WTC11 (cell line): ENCODE measurements at regions of chr12 and their contacts with region 1.

Region 1: GRCh38 chr12:13255792-13256691 is 59.5 kb downstream of the EMP1 start:
- DNase-seq: peak; percentile 98
- ATAC-seq: peak; percentile 93
- H3K4me3 Mint-ChIP-seq: peak overlapping the region; percentile 53
- H3K27ac Mint-ChIP-seq: peak overlapping the region; percentile 94
- H3K4me1 Mint-ChIP-seq: peaks cover 32% of the 10 kb centered on the region
- H3K27me3 Mint-ChIP-seq: peaks cover 21% of the 10 kb centered on the region
- CTCF ChIP-seq: peak; percentile 94

Region 2: GRCh38 chr12:12776261-12776660 is 479.8 kb before region 1 on chr12:
- CTCF ChIA-PET with region 1: no interaction called
- POLR2A ChIA-PET with region 1: no interaction called
- DNase-seq: no peak
- ATAC-seq: no peak
- H3K4me3 Mint-ChIP-seq: no peak overlapping the region
- H3K27ac Mint-ChIP-seq: no peak overlapping the region
- H3K4me1 Mint-ChIP-seq: no peaks in the 10 kb centered on the region
- H3K27me3 Mint-ChIP-seq: no peaks in the 10 kb centered on the region; the same call in 1 of the 2 replicates
- CTCF ChIP-seq: no peak

Region 3: GRCh38 chr12:13270817-13271216 is 14.8 kb after region 1 on chr12:
- CTCF ChIA-PET with region 1: interaction called, 118 read pairs
- POLR2A ChIA-PET with region 1: no interaction called
- DNase-seq: no peak
- ATAC-seq: peak; percentile 57
- H3K4me3 Mint-ChIP-seq: no peak overlapping the region
- H3K27ac Mint-ChIP-seq: no peak overlapping the region
- H3K4me1 Mint-ChIP-seq: peaks cover 22% of the 10 kb centered on the region
- H3K27me3 Mint-ChIP-seq: no peaks in the 10 kb centered on the region; the same call in none of the 2 replicates
- CTCF ChIP-seq: no peak

Region 4: GRCh38 chr12:13362260-13362841 is 106.3 kb after region 1 on chr12:
- CTCF ChIA-PET with region 1: interaction called, 38 read pairs
- POLR2A ChIA-PET with region 1: interaction called, 3 read pairs
- DNase-seq: peak; percentile 80
- ATAC-seq: peak; percentile 99
- H3K4me3 Mint-ChIP-seq: no peak overlapping the region
- H3K27ac Mint-ChIP-seq: no peak overlapping the region
- H3K4me1 Mint-ChIP-seq: peaks cover 7% of the 10 kb centered on the region
- H3K27me3 Mint-ChIP-seq: no peaks in the 10 kb centered on the region
- CTCF ChIP-seq: peak; percentile 72

Region 5: DNA sequence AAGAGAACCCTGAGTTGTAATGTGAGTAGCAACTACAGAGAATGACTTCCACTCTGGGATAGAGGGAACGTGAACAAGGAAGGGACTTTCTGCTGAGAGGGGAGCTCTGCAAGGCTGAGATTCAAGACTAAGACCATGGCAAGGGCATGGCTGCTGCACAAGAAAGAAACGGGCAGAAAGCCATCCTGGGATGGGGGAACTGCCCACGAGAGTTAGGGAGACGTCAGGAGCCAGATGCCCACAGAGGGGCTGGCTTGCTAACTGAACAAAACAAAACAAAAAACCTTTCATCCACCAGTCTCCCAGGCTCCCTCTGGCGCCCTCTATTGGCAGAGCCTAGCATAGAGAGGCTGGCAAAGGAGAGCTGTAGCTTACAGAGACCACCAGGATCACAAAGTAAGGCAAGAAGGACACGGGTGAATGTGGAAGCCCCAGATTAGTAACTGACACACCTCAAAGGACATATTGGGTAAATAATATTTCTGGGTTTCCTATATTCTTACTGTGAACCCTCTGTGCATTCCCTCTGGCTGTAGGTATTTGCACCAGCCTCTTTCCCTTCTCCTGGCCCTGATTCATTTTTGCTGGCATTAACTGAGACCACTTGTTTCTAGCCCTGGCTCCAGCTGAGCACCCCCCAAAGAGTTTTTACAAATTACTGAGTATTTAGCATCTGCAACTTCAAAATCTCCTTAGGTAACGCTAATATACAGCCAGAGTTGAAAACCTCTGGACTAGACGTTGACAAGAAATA is 278.8 kb after region 1 on chr12:
- CTCF ChIA-PET with region 1: interaction called, 65 read pairs
- POLR2A ChIA-PET with region 1: no interaction called
- DNase-seq: peak; percentile 97
- ATAC-seq: peak; percentile 89
- H3K4me3 Mint-ChIP-seq: peak overlapping the region; percentile 53
- H3K27ac Mint-ChIP-seq: peak overlapping the region; percentile 43
- H3K4me1 Mint-ChIP-seq: peaks cover 40% of the 10 kb centered on the region
- H3K27me3 Mint-ChIP-seq: peaks cover 5% of the 10 kb centered on the region
- CTCF ChIP-seq: peak; percentile 90

Region 6: DNA sequence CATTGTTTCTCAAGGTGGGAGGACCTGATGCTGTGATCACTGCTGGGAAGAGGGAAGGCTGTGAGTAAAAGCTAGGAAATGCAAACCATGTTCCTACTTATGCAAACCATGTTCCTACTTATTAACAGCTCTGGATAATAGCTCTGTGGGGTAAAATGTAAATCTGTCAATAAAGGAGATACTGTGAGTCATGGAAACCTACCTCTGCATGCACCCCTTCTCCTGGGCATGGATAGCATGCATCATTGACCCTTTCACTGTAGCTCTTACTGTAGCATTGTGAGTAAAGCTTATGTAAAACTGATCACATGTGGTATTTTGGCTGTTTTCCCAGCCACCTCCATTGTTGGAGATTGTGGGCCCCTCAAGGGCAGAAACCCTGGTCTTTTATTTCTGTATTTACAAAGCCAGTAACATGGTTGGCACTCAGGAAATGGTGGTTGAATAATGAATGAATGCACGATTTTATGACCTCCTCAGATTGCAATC is 471.7 kb after region 1 on chr12:
- CTCF ChIA-PET with region 1: interaction called, 10 read pairs
- POLR2A ChIA-PET with region 1: no interaction called
- DNase-seq: no peak
- ATAC-seq: peak; percentile 84
- H3K4me3 Mint-ChIP-seq: no peak overlapping the region
- H3K27ac Mint-ChIP-seq: no peak overlapping the region
- H3K4me1 Mint-ChIP-seq: peaks cover 33% of the 10 kb centered on the region
- H3K27me3 Mint-ChIP-seq: peaks cover 96% of the 10 kb centered on the region
- CTCF ChIP-seq: no peak

Region 7: DNA sequence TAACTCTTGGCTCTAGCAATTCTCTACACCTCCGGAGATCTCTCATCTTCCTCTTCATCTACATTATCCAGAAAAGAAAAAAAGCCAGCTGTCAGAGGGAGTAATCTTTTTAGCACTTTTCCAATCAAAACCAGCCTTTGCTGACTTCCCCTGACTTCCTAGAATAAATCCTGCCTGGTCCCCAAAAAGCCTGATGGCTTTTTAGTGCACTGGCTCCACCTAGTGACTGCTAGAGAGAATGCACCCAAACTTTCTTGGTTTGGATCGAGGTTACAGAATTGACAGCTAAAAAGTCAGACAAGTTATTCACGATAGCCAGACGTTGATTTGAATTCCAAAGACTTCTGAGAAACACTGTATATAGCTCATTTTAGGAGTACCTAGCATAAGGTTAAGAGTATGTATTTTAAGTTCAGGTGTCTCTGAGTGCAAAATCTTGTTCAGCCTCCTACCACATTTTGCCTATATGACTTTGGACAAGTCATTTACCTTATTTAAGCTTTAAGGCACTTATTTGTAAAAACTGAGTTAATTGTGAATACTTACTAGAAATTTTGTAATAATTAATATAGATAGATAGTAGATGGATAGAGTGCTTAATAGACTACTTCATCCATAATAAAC is 911.1 kb after region 1 on chr12:
- CTCF ChIA-PET with region 1: interaction called, 15 read pairs
- POLR2A ChIA-PET with region 1: no interaction called
- DNase-seq: peak; percentile 61
- ATAC-seq: peak; percentile 44
- H3K4me3 Mint-ChIP-seq: no peak overlapping the region
- H3K27ac Mint-ChIP-seq: no peak overlapping the region
- H3K4me1 Mint-ChIP-seq: no peaks in the 10 kb centered on the region; the same call in 1 of the 2 replicates
- H3K27me3 Mint-ChIP-seq: peaks cover 6% of the 10 kb centered on the region
- CTCF ChIP-seq: peak; percentile 76